PC-3 (cell line): ENCODE measurements at regions of chrX and their contacts with region 1.

Region 1: GRCh38 chrX:19005910-19006309 is 22.0 kb upstream of the PHKA2 start:
- DNase-seq: peak; percentile 51
- ATAC-seq: peak; percentile 84
- H3K4me3 ChIP-seq: no peak overlapping the region
- H3K27ac ChIP-seq: no peak overlapping the region
- H3K4me1 ChIP-seq: no peaks in the 10 kb centered on the region
- H3K27me3 ChIP-seq: no peaks in the 10 kb centered on the region
- CTCF ChIP-seq: peak; percentile 62

Region 2: GRCh38 chrX:18390941-18391538 is 614.9 kb before region 1 on chrX:
- CTCF ChIA-PET with region 1: no interaction called
- POLR2A ChIA-PET with region 1: no interaction called
- intact Hi-C with region 1: loop called (anchors 5 kb)
- DNase-seq: peak; percentile 67
- ATAC-seq: peak; percentile 54; the same call in 1 of the 2 replicates
- H3K4me3 ChIP-seq: no peak overlapping the region
- H3K27ac ChIP-seq: no peak overlapping the region
- H3K4me1 ChIP-seq: no peaks in the 10 kb centered on the region
- H3K27me3 ChIP-seq: no peaks in the 10 kb centered on the region
- CTCF ChIP-seq: peak; percentile 78

Region 3: GRCh38 chrX:18490806-18491555 is 514.9 kb before region 1 on chrX:
- CTCF ChIA-PET with region 1: no interaction called
- POLR2A ChIA-PET with region 1: no interaction called
- intact Hi-C with region 1: no loop called
- DNase-seq: no peak
- ATAC-seq: no peak
- H3K4me3 ChIP-seq: no peak overlapping the region
- H3K27ac ChIP-seq: no peak overlapping the region
- H3K4me1 ChIP-seq: peaks cover 4% of the 10 kb centered on the region; the same call in 1 of the 2 replicates
- H3K27me3 ChIP-seq: no peaks in the 10 kb centered on the region
- CTCF ChIP-seq: no peak

Region 4: DNA sequence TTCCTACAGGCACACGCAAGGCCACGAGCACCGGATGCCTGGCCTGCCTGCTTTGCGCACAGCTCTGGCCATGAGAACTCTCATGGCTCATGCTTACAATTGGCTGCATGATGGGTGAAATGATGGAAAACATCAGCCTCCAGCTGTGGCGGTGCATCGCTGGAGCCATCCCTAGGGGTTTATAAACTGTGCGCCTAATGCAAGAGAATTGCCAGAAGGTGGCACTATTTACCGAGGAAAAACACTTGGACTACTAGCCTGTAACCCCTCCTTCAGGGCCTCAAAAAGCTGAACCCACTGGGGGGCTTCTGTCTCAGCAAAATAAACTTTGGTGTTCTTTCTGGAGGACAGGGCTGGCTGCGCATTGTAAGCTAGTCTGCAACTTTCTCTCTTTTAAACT is 73.9 kb before region 1 on chrX:
- CTCF ChIA-PET with region 1: no interaction called
- POLR2A ChIA-PET with region 1: no interaction called
- intact Hi-C with region 1: loop called (anchors 1 kb)
- DNase-seq: peak; percentile 58
- ATAC-seq: peak; percentile 54
- H3K4me3 ChIP-seq: no peak overlapping the region
- H3K27ac ChIP-seq: no peak overlapping the region
- H3K4me1 ChIP-seq: no peaks in the 10 kb centered on the region
- H3K27me3 ChIP-seq: no peaks in the 10 kb centered on the region
- CTCF ChIP-seq: peak; percentile 78

Region 5: DNA sequence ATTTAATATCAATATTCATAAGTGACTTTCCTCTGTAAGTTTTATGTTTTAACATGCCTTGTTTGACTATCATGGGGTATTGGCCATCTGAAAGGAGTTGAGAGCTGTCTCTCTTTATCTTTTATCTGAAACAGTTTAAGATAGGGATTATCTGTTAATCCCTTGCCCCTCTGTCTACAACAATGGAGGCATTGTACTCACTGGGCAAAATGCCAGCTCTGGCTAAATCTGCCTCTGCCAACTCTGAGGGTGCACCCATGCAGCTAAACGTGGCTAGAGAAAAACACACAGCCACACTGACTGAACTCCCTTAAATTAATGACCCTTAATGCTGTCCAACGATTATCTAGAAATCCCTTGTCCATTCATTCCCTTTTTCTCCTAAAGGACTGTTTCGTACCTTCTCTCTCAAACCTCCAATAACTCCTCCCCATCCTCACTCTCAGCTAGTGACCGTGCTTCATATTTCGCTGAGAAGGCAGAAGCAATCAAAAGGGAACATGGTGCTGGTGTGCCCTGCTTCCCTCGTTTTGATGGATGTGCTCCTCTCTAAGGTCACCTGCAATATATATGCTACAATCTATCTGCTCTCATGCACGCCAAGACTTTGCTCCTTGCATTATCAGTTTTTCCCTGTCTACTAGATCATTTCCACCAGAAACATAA is 32.2 kb before region 1 on chrX:
- CTCF ChIA-PET with region 1: no interaction called
- POLR2A ChIA-PET with region 1: no interaction called
- intact Hi-C with region 1: no loop called
- DNase-seq: peak; percentile 16
- ATAC-seq: no peak
- H3K4me3 ChIP-seq: no peak overlapping the region
- H3K27ac ChIP-seq: no peak overlapping the region
- H3K4me1 ChIP-seq: no peaks in the 10 kb centered on the region
- H3K27me3 ChIP-seq: no peaks in the 10 kb centered on the region
- CTCF ChIP-seq: no peak

Region 6: GRCh38 chrX:19070555-19071049 is 64.7 kb after region 1 on chrX:
- CTCF ChIA-PET with region 1: no interaction called
- POLR2A ChIA-PET with region 1: no interaction called
- intact Hi-C with region 1: no loop called
- DNase-seq: no peak
- ATAC-seq: no peak
- H3K4me3 ChIP-seq: no peak overlapping the region
- H3K27ac ChIP-seq: no peak overlapping the region
- H3K4me1 ChIP-seq: peaks cover 15% of the 10 kb centered on the region
- H3K27me3 ChIP-seq: no peaks in the 10 kb centered on the region
- CTCF ChIP-seq: no peak

Region 7: DNA sequence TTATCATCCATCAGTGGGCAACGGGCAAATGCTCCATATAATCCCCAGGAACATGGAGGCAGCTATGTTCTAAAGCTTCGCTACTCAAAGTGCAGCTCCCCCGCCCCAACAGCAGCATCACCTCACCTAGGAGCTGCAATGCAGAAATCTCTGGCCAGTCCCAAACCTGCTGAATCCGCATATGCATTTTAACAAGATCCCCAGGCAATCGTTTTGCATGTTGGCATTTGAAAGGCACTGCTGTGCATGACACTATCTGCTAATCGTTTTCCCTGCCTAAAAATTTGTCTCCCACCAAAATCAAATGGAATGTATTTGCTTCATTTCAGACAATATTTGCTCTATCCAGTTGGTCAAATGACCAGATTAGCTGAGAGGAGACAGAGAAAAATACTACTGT is 101.1 kb after region 1 on chrX:
- CTCF ChIA-PET with region 1: no interaction called
- POLR2A ChIA-PET with region 1: no interaction called
- intact Hi-C with region 1: no loop called
- DNase-seq: no peak
- ATAC-seq: no peak
- H3K4me3 ChIP-seq: no peak overlapping the region
- H3K27ac ChIP-seq: no peak overlapping the region
- H3K4me1 ChIP-seq: peaks cover 5% of the 10 kb centered on the region; the same call in 1 of the 2 replicates
- H3K27me3 ChIP-seq: no peaks in the 10 kb centered on the region
- CTCF ChIP-seq: no peak

Region 8: GRCh38 chrX:19174401-19175025 is 168.6 kb after region 1 on chrX:
- CTCF ChIA-PET with region 1: interaction called, 11 read pairs
- POLR2A ChIA-PET with region 1: no interaction called
- intact Hi-C with region 1: no loop called
- DNase-seq: peak; percentile 91
- ATAC-seq: peak; percentile 98
- H3K4me3 ChIP-seq: no peak overlapping the region
- H3K27ac ChIP-seq: peak overlapping the region; percentile 86
- H3K4me1 ChIP-seq: peaks cover 29% of the 10 kb centered on the region
- H3K27me3 ChIP-seq: no peaks in the 10 kb centered on the region
- CTCF ChIP-seq: no peak